ENCODE measurements at regions of chr5 and their contacts with region 1.

Region 1: DNA sequence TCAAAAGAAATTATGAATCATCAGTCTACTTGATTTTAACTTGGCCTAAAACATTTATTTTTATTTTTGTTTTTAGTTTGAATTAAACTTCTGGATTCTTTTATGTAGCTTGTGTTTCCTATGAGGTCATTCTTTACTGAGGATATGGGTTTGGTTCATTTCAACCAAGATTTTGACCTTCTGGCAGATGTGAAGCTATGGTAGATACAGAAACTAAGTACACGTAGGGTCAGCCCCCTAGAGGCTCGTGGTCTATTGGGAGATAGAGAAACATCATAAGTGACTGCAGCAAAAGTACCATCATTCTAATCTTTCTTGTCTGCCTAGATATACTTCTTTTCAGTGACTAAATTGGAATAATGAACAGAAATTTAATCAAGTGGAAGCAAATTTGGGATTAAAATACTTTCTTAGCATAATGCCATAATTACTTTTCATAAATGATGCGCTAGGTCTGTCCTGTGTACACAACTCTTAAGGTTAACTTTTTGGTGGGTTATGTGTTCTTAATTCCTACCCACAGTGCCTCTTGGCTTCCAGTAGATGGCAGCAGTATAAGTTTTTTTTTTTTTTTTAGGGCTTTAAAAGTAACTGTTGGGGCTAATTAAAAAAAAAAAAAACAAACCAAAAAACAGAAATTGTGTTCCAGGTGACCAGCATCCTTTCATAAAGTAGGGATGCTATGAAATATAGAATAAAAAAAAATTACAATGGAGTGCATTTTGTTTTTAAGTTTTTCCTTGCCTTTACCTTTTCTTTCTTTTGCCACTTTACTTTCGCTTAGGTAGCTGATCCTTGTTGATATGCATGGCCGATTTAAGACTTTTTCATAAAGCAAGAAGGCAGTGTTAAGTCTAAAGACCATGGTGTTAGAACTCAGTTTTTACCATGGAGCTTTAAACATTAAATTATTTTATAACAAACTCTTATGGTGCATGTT is 49.9 kb downstream of the LRRTM2 start:
- DNase-seq: no peak
- ATAC-seq: no peak
- H3K4me3 Mint-ChIP-seq: no peak overlapping the region
- H3K27ac Mint-ChIP-seq: no peak overlapping the region
- H3K4me1 Mint-ChIP-seq: no peaks in the 10 kb centered on the region
- H3K27me3 Mint-ChIP-seq: no peaks in the 10 kb centered on the region
- CTCF ChIP-seq: no peak

Region 2: GRCh38 chr5:139262742-139263445 is 437.7 kb after region 1 on chr5:
- CTCF ChIA-PET with region 1: interaction called, 5 read pairs
- POLR2A ChIA-PET with region 1: no interaction called
- intact Hi-C with region 1: loop called (anchors 1 kb)
- DNase-seq: no peak
- ATAC-seq: peak; percentile 99
- H3K4me3 Mint-ChIP-seq: no peak overlapping the region
- H3K27ac Mint-ChIP-seq: no peak overlapping the region
- H3K4me1 Mint-ChIP-seq: peaks cover 1% of the 10 kb centered on the region
- H3K27me3 Mint-ChIP-seq: peaks cover 10% of the 10 kb centered on the region
- CTCF ChIP-seq: no peak

Measured in activated B cell treated with CpG ODN at 0.5 μM for 24 hours (primary cell).